ENCODE measurements at regions of chr14 and their contacts with region 1.

Region 1: DNA sequence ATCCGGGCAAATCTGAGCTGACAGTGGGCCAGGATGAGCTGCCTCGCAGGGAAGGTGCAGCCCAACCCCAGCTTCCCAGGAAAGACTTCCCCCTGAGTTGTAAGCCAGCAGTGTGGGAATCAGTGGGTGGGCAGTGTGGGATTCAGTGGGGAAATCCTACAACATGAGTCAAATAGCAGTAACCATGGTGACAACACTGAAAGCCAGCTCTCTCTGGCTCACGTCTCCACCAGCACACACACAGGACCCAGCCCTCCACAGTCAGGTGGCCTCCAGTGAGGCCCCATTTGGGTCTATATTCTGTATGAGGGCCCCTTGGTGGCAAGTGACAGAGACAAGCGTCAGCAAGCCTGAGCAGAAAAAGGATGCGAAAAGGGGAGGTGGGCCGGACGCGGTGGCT is 6.0 kb upstream of the LGALS3 start:
- DNase-seq: peak; percentile 84
- H3K4me3 ChIP-seq: no peak overlapping the region
- H3K27ac ChIP-seq: peak overlapping the region; percentile 81
- H3K27me3 ChIP-seq: no peaks in the 10 kb centered on the region
- CTCF ChIP-seq: no peak

Region 2: DNA sequence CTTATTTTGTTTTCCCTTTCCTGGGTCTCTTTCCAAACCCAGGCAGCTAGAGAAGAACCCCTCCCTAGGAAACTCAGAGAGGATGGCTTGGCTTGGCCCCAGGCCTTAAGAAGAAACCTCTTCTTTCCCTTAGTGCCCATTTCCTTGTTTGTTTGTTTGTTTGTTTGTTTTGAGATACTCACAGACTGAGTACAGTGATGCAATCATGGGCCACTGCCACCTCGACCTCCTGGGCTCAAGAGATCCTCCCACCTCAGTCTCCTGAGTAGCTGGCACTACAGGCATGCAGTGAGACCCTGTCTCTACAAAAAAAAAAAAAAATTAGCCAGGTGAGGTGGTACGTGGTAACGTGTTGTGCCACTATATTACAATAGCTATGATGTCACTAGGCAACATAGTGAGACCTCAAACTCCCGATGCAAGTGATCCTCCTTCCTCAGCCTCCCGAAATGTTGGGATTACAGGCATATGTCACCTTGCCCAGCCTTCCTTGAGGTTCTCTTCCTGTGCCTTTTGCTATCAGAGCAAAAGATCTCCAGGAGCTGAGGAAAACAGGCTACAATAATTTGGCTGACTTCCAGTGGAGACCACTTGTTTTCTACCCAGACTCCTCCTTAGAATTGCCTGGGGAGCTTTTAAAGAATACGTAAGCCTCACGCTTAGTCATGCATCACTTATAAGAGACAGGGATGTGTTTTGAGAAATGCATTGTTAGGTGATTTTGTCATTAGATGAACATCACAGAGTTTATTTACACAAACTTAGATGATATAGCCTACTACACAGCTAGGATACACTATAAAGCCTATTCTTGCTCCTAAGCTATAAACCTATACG is 28.6 kb before region 1 on chr14:
- CTCF ChIA-PET with region 1: no interaction called
- POLR2A ChIA-PET with region 1: no interaction called
- DNase-seq: peak; percentile 23
- H3K4me3 ChIP-seq: no peak overlapping the region
- H3K27ac ChIP-seq: peak overlapping the region; percentile 65
- H3K27me3 ChIP-seq: no peaks in the 10 kb centered on the region
- CTCF ChIP-seq: no peak

Region 3: DNA sequence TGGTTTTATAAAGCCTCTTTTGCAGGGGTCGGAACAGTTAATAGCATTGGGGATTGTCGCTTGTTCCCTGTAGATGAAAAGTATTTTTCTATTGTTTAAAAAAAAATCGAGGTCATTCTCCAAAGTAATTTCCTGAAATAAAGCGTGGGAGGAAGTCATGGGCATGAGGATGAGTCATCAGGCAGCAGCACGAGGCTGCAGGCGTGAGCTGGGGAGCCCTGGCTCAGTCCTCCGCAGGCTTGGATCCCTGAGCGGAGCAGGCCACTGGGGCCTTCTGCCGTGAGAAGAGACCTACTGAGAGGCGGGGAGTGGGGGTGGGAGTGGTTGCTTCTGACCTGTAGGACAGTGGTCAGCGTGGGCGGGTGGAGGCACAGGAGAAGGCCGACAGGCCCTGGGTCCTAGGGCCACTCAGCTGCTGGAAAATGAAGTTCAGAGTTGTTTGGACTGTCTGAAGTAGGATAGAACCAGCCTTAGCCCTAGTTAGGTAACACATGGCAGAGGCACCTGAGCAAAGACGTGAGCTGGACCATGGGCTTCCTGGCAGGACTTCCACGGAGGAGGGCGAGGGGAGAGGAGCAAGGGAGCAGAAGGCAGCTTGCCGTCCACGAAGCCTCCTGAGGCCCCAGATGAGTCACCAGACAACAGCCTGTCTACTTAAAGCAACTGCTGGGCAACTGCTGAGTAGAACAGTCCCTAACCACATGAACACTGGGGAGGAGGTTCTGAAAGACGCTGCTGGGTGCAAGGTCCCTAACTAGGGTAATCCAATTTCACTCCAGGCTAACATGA is 15.1 kb before region 1 on chr14:
- CTCF ChIA-PET with region 1: no interaction called
- POLR2A ChIA-PET with region 1: interaction called, 33 read pairs
- DNase-seq: peak; percentile 93
- H3K4me3 ChIP-seq: peak overlapping the region; percentile 38
- H3K27ac ChIP-seq: peak overlapping the region; percentile 100
- H3K27me3 ChIP-seq: no peaks in the 10 kb centered on the region
- CTCF ChIP-seq: no peak

Region 4: GRCh38 chr14:55152052-55152753 is 29.1 kb after region 1 on chr14:
- CTCF ChIA-PET with region 1: no interaction called
- POLR2A ChIA-PET with region 1: no interaction called
- DNase-seq: no peak
- H3K4me3 ChIP-seq: no peak overlapping the region
- H3K27ac ChIP-seq: peak overlapping the region; percentile 65
- H3K27me3 ChIP-seq: no peaks in the 10 kb centered on the region
- CTCF ChIP-seq: no peak